Heart left ventricle (tissue), 16 donors: ENCODE measurements at regions of chr9 and their contacts with region 1.

Region 1: GRCh38 chr9:7549249-7549648 is 250.3 kb downstream of the DMAC1 start:
- DNase-seq: peak; percentile 32 to 62 (median 55)
- ATAC-seq: peak in 3 of 4 donors; percentile 34 to 55 (median 47)
- H3K4me3 ChIP-seq: no peak overlapping the region
- H3K27ac ChIP-seq: no peak overlapping the region
- H3K4me1 ChIP-seq: no peaks in the 10 kb centered on the region
- H3K27me3 ChIP-seq: peaks cover 0 to 5% (median 0%) of the 10 kb centered on the region in 9 donors
- CTCF ChIP-seq: no peak
- POLR2A ChIP-seq: no peak

Region 2: GRCh38 chr9:7387840-7388239 is 161.4 kb before region 1 on chr9:
- intact Hi-C with region 1: no loop called
- DNase-seq: peak in 3 of 5 donors; percentile 14 to 44 (median 25)
- ATAC-seq: peak; percentile 38 to 70 (median 58)
- H3K4me3 ChIP-seq: no peak overlapping the region
- H3K27ac ChIP-seq: peak overlapping the region in 1 of 12 donors; percentile 1
- H3K4me1 ChIP-seq: no peaks in the 10 kb centered on the region
- H3K27me3 ChIP-seq: no peaks in the 10 kb centered on the region
- CTCF ChIP-seq: no peak
- POLR2A ChIP-seq: no peak

Region 3: GRCh38 chr9:7500521-7500920 is 48.7 kb before region 1 on chr9:
- intact Hi-C with region 1: loop called in 1 of 10 experiments (anchors 5 kb)
- DNase-seq: no peak
- ATAC-seq: no peak
- H3K4me3 ChIP-seq: no peak overlapping the region
- H3K27ac ChIP-seq: no peak overlapping the region
- H3K4me1 ChIP-seq: no peaks in the 10 kb centered on the region
- H3K27me3 ChIP-seq: no peaks in the 10 kb centered on the region
- CTCF ChIP-seq: no peak
- POLR2A ChIP-seq: no peak

Region 4: GRCh38 chr9:7607421-7607820 is 58.2 kb after region 1 on chr9:
- intact Hi-C with region 1: loop called in 1 of 10 experiments (anchors 10 kb)
- DNase-seq: no peak
- ATAC-seq: no peak
- H3K4me3 ChIP-seq: no peak overlapping the region
- H3K27ac ChIP-seq: no peak overlapping the region
- H3K4me1 ChIP-seq: no peaks in the 10 kb centered on the region
- H3K27me3 ChIP-seq: no peaks in the 10 kb centered on the region
- CTCF ChIP-seq: no peak
- POLR2A ChIP-seq: no peak